Activated CD4-positive, alpha-beta T cell treated with anti-CD3 and anti-CD28 coated beads, Interleukin-2, amount 10 ng/mL, durations not matched to agents 24 days and 14 days (primary cell): ENCODE measurements at regions of chr18 and their contacts with region 1.

Region 1: GRCh38 chr18:46073474-46074331 is 1.6 kb upstream of the PSTPIP2 start:
- DNase-seq: peak; percentile 91
- H3K4me3 Mint-ChIP-seq: no peak overlapping the region
- H3K27ac Mint-ChIP-seq: no peak overlapping the region
- H3K4me1 Mint-ChIP-seq: peaks cover 31% of the 10 kb centered on the region
- H3K27me3 Mint-ChIP-seq: no peaks in the 10 kb centered on the region

Region 2: GRCh38 chr18:45664824-45665763 is 408.6 kb before region 1 on chr18:
- intact Hi-C with region 1: loop called (anchors 1 kb)
- DNase-seq: peak; percentile 90
- H3K4me3 Mint-ChIP-seq: peak overlapping the region; percentile 7
- H3K27ac Mint-ChIP-seq: no peak overlapping the region
- H3K4me1 Mint-ChIP-seq: peaks cover 46% of the 10 kb centered on the region
- H3K27me3 Mint-ChIP-seq: peaks cover 23% of the 10 kb centered on the region

Region 3: GRCh38 chr18:45702866-45703265 is 370.8 kb before region 1 on chr18:
- intact Hi-C with region 1: no loop called
- DNase-seq: no peak
- H3K4me3 Mint-ChIP-seq: no peak overlapping the region
- H3K27ac Mint-ChIP-seq: no peak overlapping the region
- H3K4me1 Mint-ChIP-seq: no peaks in the 10 kb centered on the region
- H3K27me3 Mint-ChIP-seq: peaks cover 21% of the 10 kb centered on the region

Region 4: GRCh38 chr18:45879681-45880655 is 193.7 kb before region 1 on chr18:
- intact Hi-C with region 1: loop called (anchors 5 kb)
- DNase-seq: peak; percentile 92
- H3K4me3 Mint-ChIP-seq: no peak overlapping the region
- H3K27ac Mint-ChIP-seq: no peak overlapping the region
- H3K4me1 Mint-ChIP-seq: peaks cover 10% of the 10 kb centered on the region
- H3K27me3 Mint-ChIP-seq: no peaks in the 10 kb centered on the region

Region 5: GRCh38 chr18:45967007-45967706 is 106.5 kb before region 1 on chr18 and contains the start of gene EPG5:
- intact Hi-C with region 1: loop called (anchors 2 kb)
- DNase-seq: peak; percentile 98
- H3K4me3 Mint-ChIP-seq: peak within 1 kb of the TSS; percentile 99
- H3K27ac Mint-ChIP-seq: peak within 1 kb of the TSS; percentile 94
- H3K4me1 Mint-ChIP-seq: peaks cover 26% of the 10 kb centered on the region
- H3K27me3 Mint-ChIP-seq: peaks cover 3% of the 10 kb centered on the region
- total RNA-seq, gene EPG5: 14.9 and 15.5 TPM in 2 replicates

Region 6: DNA sequence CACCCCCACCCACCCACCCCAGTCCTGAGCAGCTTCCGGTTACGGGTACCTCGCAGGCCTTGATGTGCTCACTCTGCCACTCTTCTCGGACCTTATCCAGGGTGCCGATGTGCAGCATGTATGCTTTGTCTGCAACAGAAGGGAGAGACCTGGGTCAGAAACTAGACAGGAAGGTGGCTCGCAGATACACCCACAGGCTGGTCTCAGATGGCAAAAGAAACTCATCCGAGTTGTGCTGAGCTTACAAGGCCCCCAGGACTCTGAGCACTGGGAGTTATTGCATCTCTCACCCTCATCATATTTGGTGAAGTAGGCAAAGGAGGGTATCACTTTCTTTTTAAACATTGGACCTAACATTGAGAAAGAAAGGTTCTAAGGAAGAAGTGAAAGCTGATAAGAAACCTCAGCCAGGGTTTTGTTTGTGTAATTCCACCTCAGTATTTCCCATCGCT is 76.0 kb before region 1 on chr18:
- intact Hi-C with region 1: loop called (anchors 5 kb)
- DNase-seq: peak; percentile 75
- H3K4me3 Mint-ChIP-seq: peak overlapping the region; percentile 51
- H3K27ac Mint-ChIP-seq: peak overlapping the region; percentile 83
- H3K4me1 Mint-ChIP-seq: peaks cover 30% of the 10 kb centered on the region
- H3K27me3 Mint-ChIP-seq: no peaks in the 10 kb centered on the region

Region 7: GRCh38 chr18:46028536-46028891 is 45.2 kb before region 1 on chr18:
- intact Hi-C with region 1: loop called (anchors 5 kb)
- DNase-seq: no peak
- H3K4me3 Mint-ChIP-seq: peak overlapping the region; percentile 91
- H3K27ac Mint-ChIP-seq: peak overlapping the region; percentile 80
- H3K4me1 Mint-ChIP-seq: peaks cover 13% of the 10 kb centered on the region
- H3K27me3 Mint-ChIP-seq: peaks cover 14% of the 10 kb centered on the region

Region 8: GRCh38 chr18:46084431-46084830 is 10.7 kb after region 1 on chr18:
- intact Hi-C with region 1: no loop called
- DNase-seq: no peak
- H3K4me3 Mint-ChIP-seq: no peak overlapping the region
- H3K27ac Mint-ChIP-seq: no peak overlapping the region
- H3K4me1 Mint-ChIP-seq: peaks cover 6% of the 10 kb centered on the region
- H3K27me3 Mint-ChIP-seq: no peaks in the 10 kb centered on the region